Endothelial cell of umbilical vein (primary cell): ENCODE measurements at regions of chr10 and their contacts with region 1.

Region 1: DNA sequence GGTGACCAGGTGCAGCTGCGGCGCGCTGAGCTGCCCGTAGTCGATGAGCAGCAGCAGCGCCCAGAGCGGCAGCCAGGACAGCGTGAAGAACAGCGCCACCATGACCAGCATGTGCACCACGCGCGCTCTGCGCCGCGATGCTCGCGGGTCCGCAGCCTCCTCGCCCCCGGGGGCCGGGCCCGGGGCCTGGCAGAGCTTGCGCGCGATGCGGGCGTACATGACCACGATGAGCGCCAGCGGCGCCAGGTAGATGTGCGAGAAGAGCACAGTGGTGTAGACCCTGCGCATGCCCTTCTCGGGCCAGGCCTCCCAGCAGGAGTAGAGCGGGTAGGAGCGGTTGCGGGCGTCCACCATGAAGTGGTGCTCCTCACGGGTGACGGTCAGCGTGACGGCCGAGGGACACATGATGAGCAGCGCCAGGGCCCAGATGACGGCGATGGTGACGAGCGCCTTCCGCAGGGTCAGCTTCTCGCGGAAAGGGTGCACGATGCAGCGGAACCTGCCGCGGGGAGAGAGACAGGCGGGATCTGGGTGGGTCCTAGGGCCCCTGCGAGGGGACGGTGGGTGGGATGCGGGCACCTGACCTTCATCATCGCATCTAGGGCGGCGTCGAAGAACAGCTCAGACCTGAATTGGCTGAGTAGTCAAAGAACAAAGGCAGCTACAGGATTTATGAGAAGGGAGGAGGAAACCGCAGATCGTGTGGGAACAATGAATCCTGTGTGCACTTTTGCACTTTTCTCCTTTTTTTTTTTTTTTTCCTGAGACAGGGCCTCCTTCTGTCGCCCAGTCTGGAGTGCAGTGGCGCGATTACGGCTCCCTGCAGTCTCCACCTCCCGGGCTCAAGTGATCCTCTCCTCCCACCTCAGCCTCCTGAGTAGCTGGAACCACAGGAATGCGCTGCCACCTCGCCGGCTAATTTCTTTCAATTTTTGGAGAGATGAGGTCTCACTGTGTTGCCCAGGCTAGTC is 22.4 kb upstream of the PPA1 start:
- DNase-seq: peak; percentile 45
- H3K4me3 ChIP-seq: no peak overlapping the region
- H3K27ac ChIP-seq: no peak overlapping the region
- H3K4me1 ChIP-seq: peaks cover 3% of the 10 kb centered on the region
- H3K27me3 ChIP-seq: peaks cover 48 to 64% of the 10 kb centered on the region in 2 experiments
- CTCF ChIP-seq: peak in 1 of 2 donors; percentile 7
- POLR2A ChIP-seq: no peak

Region 2: DNA sequence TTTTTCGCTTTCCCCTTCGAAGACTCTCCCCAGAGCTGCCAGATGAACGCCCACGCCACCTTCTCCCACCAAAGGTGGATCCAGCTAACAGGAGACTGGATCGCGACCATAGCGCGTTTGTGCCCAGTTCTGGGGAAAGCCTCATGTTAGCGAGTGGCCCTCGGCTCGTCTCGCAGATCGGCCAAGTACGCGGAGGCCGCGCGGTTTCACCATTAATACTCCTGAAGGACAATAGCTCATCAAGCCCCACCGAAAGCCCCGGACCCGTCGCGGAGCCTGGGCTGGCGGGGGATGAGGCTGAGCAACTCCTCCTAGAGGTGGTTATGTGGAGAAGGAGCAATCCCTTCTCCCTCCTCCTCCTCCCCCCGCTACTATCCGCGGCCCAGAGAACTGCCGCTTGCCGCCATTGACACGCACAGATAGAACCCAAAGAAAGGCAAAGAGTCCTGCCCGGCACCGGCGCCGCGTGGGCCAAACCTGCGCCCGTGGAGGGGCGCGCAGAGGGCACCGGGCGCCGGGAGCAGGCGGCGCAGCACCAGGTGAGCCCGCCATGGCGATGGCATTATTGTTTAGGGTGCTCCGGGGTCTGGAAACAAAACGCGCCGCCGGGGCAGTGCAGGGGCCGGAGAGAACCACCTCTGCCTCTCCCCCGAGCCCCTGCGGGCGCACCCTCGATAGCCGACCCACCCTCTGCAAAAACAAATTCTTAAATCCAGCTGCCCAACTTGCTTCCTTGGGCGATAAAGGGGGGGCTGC is 203.0 kb before region 1 on chr10 and contains the start of gene MACROH2A2:
- CTCF ChIA-PET with region 1: no interaction called
- POLR2A ChIA-PET with region 1: no interaction called
- dilution Hi-C with region 1: no loop called
- intact Hi-C with region 1: no loop called
- DNase-seq: peak; percentile 12
- H3K4me3 ChIP-seq: peak within 1 kb of the TSS in 1 of 3 experiments; percentile 17
- H3K27ac ChIP-seq: no peak within 1 kb of the TSS
- H3K4me1 ChIP-seq: no peaks in the 10 kb centered on the region
- H3K27me3 ChIP-seq: peaks cover 58 to 90% of the 10 kb centered on the region in 2 experiments
- CTCF ChIP-seq: no peak
- POLR2A ChIP-seq: no peak
- total RNA-seq, gene MACROH2A2: not detected in 2 replicates

Region 3: DNA sequence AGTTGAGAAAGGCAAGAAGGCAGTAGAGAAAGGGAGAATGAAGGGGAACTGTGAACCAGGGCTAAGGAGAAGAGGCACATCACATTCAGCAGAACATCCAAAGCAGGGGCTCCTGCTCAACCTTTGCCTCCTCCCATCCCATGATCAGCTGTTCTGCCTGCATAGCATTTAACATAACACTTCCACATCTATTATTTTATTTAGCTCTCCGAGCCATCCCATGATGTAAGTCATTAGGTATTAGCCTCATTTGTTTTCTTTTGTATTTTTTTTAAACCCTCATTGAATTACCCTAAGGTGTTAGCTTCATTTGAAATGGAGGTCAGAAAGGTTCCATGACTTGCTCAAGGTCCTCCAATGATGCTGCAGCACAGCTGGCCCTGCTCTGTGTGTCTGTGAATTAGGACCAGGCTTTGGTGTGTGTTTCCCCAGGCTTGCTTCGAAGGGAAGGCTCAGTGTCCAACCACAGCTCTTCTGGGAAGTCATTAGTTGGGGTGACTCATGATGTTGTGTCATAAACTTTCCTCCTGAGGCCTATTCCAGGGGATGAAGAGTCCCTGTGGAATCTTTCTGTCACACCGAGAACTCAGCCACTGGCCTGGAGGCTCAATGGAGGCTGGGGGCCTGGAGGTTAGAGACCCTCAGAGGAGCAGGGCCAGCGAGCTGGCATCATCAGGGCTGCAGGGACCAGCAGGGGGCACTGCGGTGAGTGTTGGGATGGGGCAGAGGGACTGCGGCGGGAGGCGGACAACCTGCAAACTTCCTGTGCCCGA is 11.7 kb after region 1 on chr10:
- CTCF ChIA-PET with region 1: interaction called, 18 read pairs
- POLR2A ChIA-PET with region 1: no interaction called
- dilution Hi-C with region 1: no loop called
- intact Hi-C with region 1: no loop called
- DNase-seq: peak; percentile 25
- H3K4me3 ChIP-seq: no peak overlapping the region
- H3K27ac ChIP-seq: no peak overlapping the region
- H3K4me1 ChIP-seq: peaks cover 2% of the 10 kb centered on the region
- H3K27me3 ChIP-seq: peaks cover 13% of the 10 kb centered on the region in 2 experiments
- CTCF ChIP-seq: peak; percentile 16 to 26
- POLR2A ChIP-seq: no peak

Region 4: GRCh38 chr10:71371750-71372166 is 1116.1 kb after region 1 on chr10:
- CTCF ChIA-PET with region 1: no interaction called
- POLR2A ChIA-PET with region 1: no interaction called
- dilution Hi-C with region 1: no loop called
- intact Hi-C with region 1: no loop called
- DNase-seq: no peak
- H3K4me3 ChIP-seq: no peak overlapping the region
- H3K27ac ChIP-seq: no peak overlapping the region
- H3K4me1 ChIP-seq: peaks cover 9% of the 10 kb centered on the region
- H3K27me3 ChIP-seq: peaks cover 0 to 21% of the 10 kb centered on the region in 2 experiments
- CTCF ChIP-seq: no peak
- POLR2A ChIP-seq: no peak